Psoas muscle (tissue), 8 donors: ENCODE measurements at regions of chr15 and their contacts with region 1.

Region 1: DNA sequence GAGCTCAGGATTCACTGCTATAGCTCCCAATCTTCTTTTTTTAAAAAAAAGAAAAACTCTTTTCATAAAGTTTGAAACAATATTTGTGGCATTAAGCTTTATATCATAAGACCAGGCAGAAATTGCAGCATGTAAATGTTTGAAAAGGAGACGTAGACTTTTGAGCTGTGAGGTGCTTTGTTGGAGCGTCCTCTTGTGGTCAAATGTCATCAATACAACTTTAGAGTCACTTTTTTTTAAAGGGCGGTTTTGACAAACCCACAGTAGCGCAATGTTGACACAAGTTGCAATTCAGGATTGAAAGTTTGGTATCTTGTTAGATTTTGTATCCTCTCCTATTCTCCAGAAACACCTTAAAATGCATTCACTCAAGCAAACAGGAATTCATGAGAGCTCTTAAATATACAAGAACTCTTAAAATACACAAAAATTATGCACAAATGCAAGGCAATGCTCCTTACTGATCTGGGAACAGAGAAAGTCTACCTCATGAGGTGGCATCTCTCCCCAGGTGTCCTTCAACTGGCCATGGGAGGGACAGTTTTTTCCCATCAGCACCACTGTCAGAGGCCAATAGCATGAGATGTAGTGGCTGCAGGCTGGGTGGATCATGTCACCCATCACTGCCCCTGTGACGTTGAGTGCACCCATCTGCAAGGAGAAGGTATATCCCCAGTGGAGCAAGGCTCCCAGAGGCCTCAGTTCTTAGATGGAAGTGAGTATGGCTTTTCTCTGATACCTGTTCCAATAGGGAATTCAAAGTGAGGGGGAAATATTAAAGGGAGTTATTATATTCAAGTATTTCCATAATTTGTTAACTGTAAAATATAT is 70.7 kb downstream of the ANXA2 start:
- DNase-seq: no peak
- ATAC-seq: peak in 3 of 4 donors; percentile 46 to 64 (median 47)
- H3K4me3 ChIP-seq: no peak overlapping the region
- H3K27ac ChIP-seq: no peak overlapping the region
- H3K4me1 ChIP-seq: no peaks in the 10 kb centered on the region
- H3K27me3 ChIP-seq: peaks cover 0 to 5% (median 2%) of the 10 kb centered on the region in 3 donors
- CTCF ChIP-seq: peak; percentile 88

Region 2: DNA sequence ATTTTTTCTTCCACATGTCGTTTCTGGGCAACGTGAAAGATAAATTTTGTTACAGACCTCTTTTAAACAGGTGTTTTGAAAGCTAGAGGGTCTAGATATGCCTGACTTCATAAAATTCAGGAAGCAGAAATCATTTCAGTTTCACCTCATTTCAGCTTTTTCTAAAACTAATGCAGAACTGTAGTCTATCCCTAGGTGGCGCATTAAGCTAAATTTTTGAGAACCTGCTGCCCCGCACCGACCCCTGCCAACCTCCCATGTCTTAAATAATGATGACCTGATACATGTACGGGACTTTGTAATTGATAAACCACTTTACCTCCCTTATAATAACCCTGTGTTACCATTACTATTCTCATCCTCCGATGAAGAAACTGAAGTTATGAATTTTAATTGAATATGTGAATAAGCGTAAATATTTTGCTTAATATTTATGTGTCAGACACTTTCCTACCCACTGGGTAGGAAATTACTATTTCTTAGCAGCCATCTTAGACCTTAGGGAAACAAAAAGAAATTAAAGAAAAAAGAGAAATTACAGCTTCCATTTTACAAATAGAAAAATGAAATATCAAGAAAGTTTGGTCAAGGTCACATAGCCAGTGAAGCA is 794.2 kb before region 1 on chr15:
- intact Hi-C with region 1: loop called in 1 of 2 experiments (anchors 10 kb)
- DNase-seq: no peak
- ATAC-seq: peak in 1 of 4 donors; percentile 54
- H3K4me3 ChIP-seq: no peak overlapping the region
- H3K27ac ChIP-seq: no peak overlapping the region
- H3K4me1 ChIP-seq: no peaks in the 10 kb centered on the region
- H3K27me3 ChIP-seq: peaks cover 0 to 4% (median 0%) of the 10 kb centered on the region in 3 donors
- CTCF ChIP-seq: peak; percentile 57

Region 3: DNA sequence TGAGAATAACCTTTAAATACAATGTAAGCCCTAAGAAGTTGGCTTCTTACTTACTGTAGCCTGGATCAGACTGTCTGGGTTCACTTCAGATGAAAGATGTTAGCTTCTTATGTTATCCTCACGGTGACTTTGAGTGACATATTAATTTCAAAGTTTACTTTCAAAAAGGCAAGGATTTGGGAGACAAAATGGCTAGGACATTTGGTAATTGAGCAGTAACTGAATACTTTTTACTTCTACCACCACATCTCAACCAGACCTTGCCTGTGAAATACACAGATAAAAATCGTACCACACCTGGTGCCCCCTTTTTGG is 601.9 kb before region 1 on chr15:
- intact Hi-C with region 1: loop called in 1 of 2 experiments (anchors 10 kb)
- DNase-seq: no peak
- ATAC-seq: no peak
- H3K4me3 ChIP-seq: no peak overlapping the region
- H3K27ac ChIP-seq: peak overlapping the region; percentile 72
- H3K4me1 ChIP-seq: peaks cover 14% of the 10 kb centered on the region
- H3K27me3 ChIP-seq: no peaks in the 10 kb centered on the region
- CTCF ChIP-seq: no peak

Region 4: GRCh38 chr15:59917504-59918157 is 409.4 kb before region 1 on chr15:
- intact Hi-C with region 1: loop called in 1 of 2 experiments (anchors 2 kb)
- DNase-seq: peak in 1 of 2 donors; percentile 14
- ATAC-seq: peak in 3 of 4 donors; percentile 59 to 65 (median 60)
- H3K4me3 ChIP-seq: no peak overlapping the region
- H3K27ac ChIP-seq: no peak overlapping the region
- H3K4me1 ChIP-seq: no peaks in the 10 kb centered on the region
- H3K27me3 ChIP-seq: peaks cover 0 to 2% (median 2%) of the 10 kb centered on the region in 3 donors
- CTCF ChIP-seq: peak; percentile 31

Region 5: GRCh38 chr15:60134609-60135008 is 192.4 kb before region 1 on chr15:
- intact Hi-C with region 1: loop called in 1 of 2 experiments (anchors 10 kb)
- DNase-seq: no peak
- ATAC-seq: no peak
- H3K4me3 ChIP-seq: no peak overlapping the region
- H3K27ac ChIP-seq: no peak overlapping the region
- H3K4me1 ChIP-seq: no peaks in the 10 kb centered on the region
- H3K27me3 ChIP-seq: peaks cover 0 to 6% (median 1%) of the 10 kb centered on the region in 3 donors
- CTCF ChIP-seq: no peak

Region 6: DNA sequence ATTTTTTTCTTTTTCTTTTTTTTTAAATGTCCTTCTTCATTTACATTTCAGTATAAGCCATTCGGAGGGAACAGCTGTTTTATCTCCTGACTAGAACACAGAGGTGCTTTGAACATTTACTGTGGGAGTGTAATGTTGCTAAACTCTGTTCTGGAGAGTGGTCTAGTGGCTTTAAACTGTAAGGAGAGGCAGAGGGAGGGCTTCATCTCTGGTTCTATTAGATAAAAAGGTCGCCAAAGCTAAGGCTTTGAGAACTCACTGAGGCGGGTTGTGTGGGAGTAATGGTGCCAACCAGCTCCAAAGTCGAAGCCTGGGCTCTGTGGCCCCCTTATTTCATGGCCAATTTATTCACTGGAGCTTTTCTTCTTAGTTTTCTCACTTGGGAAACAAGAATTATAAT is 62.5 kb before region 1 on chr15:
- intact Hi-C with region 1: no loop called
- DNase-seq: no peak
- ATAC-seq: no peak
- H3K4me3 ChIP-seq: no peak overlapping the region
- H3K27ac ChIP-seq: no peak overlapping the region
- H3K4me1 ChIP-seq: no peaks in the 10 kb centered on the region
- H3K27me3 ChIP-seq: no peaks in the 10 kb centered on the region
- CTCF ChIP-seq: no peak